ENCODE measurements at regions of chr1 and their contacts with region 1.

Region 1: GRCh38 chr1:66253330-66253921 is 280.5 kb upstream of the SGIP1 start:
- ATAC-seq: peak; percentile 86 to 92 (median 90)
- H3K4me3 ChIP-seq: no peak overlapping the region
- H3K27ac ChIP-seq: no peak overlapping the region
- H3K4me1 ChIP-seq: no peaks in the 10 kb centered on the region

Region 2: GRCh38 chr1:66374561-66375111 is 121.2 kb after region 1 on chr1:
- in situ Hi-C with region 1: loop called in 1 of 9 experiments (anchors 25 kb)
- ATAC-seq: peak in 3 of 8 experiments; percentile 12 to 88 (median 75)
- H3K4me3 ChIP-seq: no peak overlapping the region
- H3K27ac ChIP-seq: no peak overlapping the region
- H3K4me1 ChIP-seq: no peaks in the 10 kb centered on the region

Region 3: DNA sequence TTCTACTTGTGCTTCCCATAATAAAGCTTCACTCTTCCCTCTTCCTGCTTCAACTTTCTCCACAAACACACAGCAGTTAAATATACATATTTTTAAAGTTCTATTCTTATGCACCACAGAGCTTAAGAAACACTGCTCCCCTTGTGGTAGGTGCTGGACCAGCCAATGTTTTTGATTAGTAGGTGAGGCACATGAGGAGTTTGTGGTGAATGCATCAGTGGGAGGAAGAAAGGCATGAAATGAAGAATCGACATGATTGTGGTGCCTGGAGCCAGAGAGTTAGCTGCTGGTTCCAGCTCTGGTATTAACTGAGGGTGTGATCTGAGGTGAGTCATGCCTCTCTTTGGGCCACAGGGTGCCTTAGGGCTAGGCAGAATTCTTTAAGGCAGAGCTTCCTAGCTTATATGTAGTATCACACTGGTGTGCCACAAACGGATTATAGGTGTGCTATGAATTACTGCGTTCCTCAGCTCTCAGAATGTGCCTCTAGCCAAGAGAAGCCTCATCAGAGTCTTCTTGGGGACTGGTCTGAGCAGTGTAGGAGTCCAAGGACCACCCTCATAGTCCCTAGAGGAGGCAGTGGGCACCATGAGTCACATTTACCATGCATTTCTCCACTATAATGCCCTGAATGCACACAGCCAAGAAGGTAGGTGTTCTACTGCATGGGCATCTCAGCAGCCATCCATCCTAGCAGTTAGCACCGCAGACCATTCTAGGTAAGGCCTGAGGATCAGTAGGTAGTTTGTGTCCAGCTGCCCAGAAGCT is 183.1 kb after region 1 on chr1:
- in situ Hi-C with region 1: loop called in 7 of 9 experiments (anchors 10 to 25 kb)
- ATAC-seq: peak in 3 of 8 experiments; percentile 78 to 97 (median 95)
- H3K4me3 ChIP-seq: no peak overlapping the region
- H3K27ac ChIP-seq: no peak overlapping the region
- H3K4me1 ChIP-seq: no peaks in the 10 kb centered on the region

Region 4: DNA sequence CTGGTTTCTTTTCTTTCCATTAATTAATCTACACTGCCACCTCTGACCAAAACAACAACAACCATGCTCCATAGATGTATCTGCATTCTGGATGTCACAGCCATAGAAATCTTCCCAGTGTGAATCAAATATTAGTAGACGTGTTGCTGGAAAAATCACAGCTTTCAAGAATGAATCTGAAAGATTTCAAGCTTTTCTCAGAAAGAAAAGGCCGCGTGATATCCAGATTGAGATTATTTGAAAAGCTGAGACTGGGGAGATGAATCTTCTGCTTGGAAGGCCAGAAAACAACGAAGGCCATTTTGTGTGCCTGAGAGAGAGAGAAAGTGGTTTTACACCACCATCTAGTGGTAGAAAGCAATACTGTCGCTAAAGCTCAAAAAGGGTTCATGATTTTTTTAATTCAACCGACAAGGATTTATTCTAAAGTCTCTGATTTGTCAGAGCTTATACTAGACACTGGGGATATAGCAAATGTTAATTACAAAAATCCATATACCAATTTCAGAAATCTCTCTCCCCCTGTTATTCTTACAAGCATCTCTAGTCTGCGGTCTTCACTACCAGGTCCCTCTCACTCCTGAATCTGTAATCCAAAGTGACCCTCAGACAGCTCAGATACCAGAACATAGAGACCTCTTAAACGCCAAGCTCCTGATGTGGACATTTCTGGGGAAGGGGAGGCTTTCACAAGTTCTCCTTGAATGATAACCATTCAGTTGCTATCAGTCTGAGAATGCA is 193.0 kb after region 1 on chr1:
- in situ Hi-C with region 1: loop called in 7 of 9 experiments (anchors 10 to 25 kb)
- ATAC-seq: peak; percentile 58 to 79 (median 68)
- H3K4me3 ChIP-seq: no peak overlapping the region
- H3K27ac ChIP-seq: no peak overlapping the region
- H3K4me1 ChIP-seq: peaks cover 2 to 5% of the 10 kb centered on the region in 2 donors

Region 5: GRCh38 chr1:66464802-66465201 is 211.4 kb after region 1 on chr1:
- in situ Hi-C with region 1: loop called in 1 of 9 experiments (anchors 25 kb)
- ATAC-seq: peak in 3 of 8 experiments; percentile 47 to 82 (median 74)
- H3K4me3 ChIP-seq: no peak overlapping the region
- H3K27ac ChIP-seq: no peak overlapping the region
- H3K4me1 ChIP-seq: no peaks in the 10 kb centered on the region

Region 6: DNA sequence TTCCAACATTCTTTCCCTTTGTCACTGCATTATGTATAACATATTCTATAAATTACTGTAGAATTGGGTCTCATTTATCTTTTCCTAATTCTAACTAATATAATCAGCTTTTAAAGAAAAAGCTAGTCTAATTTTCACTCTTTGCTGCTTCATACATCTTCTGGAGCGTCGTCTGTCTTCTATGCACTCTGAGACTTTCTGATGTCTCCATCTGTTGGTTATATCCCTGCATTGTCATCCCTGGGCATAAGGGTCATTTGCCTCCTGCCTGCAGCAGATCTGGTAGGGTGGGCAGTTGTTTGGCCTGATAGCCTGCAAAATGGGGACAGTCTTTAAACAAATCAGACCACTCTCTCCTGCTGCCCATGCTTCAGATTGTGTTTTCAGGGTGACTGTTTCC is 458.0 kb after region 1 on chr1:
- in situ Hi-C with region 1: loop called in 1 of 9 experiments (anchors 25 kb)
- ATAC-seq: peak in 3 of 8 experiments; percentile 36 to 68 (median 40)
- H3K4me3 ChIP-seq: no peak overlapping the region
- H3K27ac ChIP-seq: no peak overlapping the region
- H3K4me1 ChIP-seq: no peaks in the 10 kb centered on the region

Region 7: DNA sequence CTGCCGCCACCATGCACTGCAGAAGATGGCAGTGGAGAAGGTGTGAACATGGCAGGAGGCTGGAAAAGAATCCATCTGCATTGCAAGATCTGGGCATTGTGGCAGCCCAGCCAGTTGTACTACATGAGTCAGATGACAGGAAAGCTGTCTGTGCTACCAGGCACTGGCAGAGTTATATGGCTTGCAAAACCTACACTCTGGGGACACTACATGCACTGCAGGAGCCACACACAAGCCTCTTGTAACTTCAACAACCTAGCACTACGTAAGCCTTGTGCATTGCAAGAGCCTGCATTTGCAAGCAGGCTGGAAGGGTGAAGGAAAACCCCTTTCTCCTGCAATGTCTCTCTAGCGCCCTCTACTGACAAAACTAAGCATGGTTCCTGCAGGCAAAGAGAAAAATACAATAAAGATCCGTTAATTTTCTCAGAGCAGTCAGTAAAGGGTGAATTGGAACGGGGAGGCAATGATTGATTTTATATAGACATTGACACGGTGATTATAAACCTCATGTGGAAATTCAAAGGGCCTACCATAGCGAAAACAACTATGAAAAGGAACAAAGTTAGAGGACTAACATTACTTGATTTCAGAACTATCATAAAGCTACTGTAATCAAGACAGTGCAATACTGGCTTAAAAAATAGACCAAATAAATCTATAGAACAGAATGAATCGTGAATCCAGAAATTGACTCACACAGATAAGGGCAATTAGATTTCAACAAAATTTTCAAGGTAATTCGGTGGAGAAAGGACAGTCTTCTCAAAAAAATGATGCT is 472.6 kb after region 1 on chr1:
- in situ Hi-C with region 1: loop called in 2 of 9 experiments (anchors 10 to 25 kb)
- ATAC-seq: peak; percentile 78 to 94 (median 91)
- H3K4me3 ChIP-seq: no peak overlapping the region
- H3K27ac ChIP-seq: no peak overlapping the region
- H3K4me1 ChIP-seq: no peaks in the 10 kb centered on the region

Measured in motor neuron (in vitro differentiated cells).